ENCODE measurements at regions of chr6 and their contacts with region 1.

Region 1: GRCh38 chr6:35583893-35584688 is 71.4 kb upstream of the TULP1 start:
- DNase-seq: peak; percentile 77
- ATAC-seq: peak; percentile 72
- H3K4me3 ChIP-seq: no peak overlapping the region
- H3K27ac ChIP-seq: no peak overlapping the region
- H3K4me1 ChIP-seq: no peaks in the 10 kb centered on the region
- H3K27me3 ChIP-seq: no peaks in the 10 kb centered on the region
- CTCF ChIP-seq: peak; percentile 95
- POLR2A ChIP-seq: no peak
- RAD21 ChIP-seq: peak; percentile 95

Region 2: GRCh38 chr6:35624341-35625070 is 40.4 kb after region 1 on chr6:
- CTCF ChIA-PET with region 1: interaction called, 5 read pairs
- POLR2A ChIA-PET with region 1: no interaction called
- dilution Hi-C with region 1: no loop called
- in situ Hi-C with region 1: no loop called
- intact Hi-C with region 1: loop called (anchors 2 kb)
- DNase-seq: peak; percentile 27
- ATAC-seq: peak; percentile 44; the same call in 1 of the 2 replicates
- H3K4me3 ChIP-seq: no peak overlapping the region
- H3K27ac ChIP-seq: no peak overlapping the region
- H3K4me1 ChIP-seq: no peaks in the 10 kb centered on the region
- H3K27me3 ChIP-seq: no peaks in the 10 kb centered on the region
- CTCF ChIP-seq: peak; percentile 40
- POLR2A ChIP-seq: no peak
- RAD21 ChIP-seq: peak; percentile 38; the same call in 1 of the 2 replicates

Region 3: GRCh38 chr6:35681298-35681697 is 97.2 kb after region 1 on chr6:
- CTCF ChIA-PET with region 1: interaction called, 6 read pairs
- POLR2A ChIA-PET with region 1: no interaction called
- dilution Hi-C with region 1: no loop called
- in situ Hi-C with region 1: loop called (anchors 5 kb)
- intact Hi-C with region 1: loop called (anchors 1 kb)
- DNase-seq: no peak
- ATAC-seq: no peak
- H3K4me3 ChIP-seq: no peak overlapping the region
- H3K27ac ChIP-seq: no peak overlapping the region
- H3K4me1 ChIP-seq: peaks cover 3% of the 10 kb centered on the region
- H3K27me3 ChIP-seq: no peaks in the 10 kb centered on the region
- CTCF ChIP-seq: no peak
- POLR2A ChIP-seq: no peak
- RAD21 ChIP-seq: no peak

Region 4: GRCh38 chr6:35688581-35689322 is 104.7 kb after region 1 on chr6 and contains the start of gene FKBP5:
- CTCF ChIA-PET with region 1: interaction called, 6 read pairs
- POLR2A ChIA-PET with region 1: no interaction called
- dilution Hi-C with region 1: no loop called
- in situ Hi-C with region 1: loop called (anchors 5 kb)
- intact Hi-C with region 1: loop called (anchors 1 kb)
- DNase-seq: peak; percentile 80
- ATAC-seq: peak; percentile 99
- H3K4me3 ChIP-seq: peak within 1 kb of the TSS; percentile 59
- H3K27ac ChIP-seq: peak within 1 kb of the TSS; percentile 13; the same call in 1 of the 2 replicates
- H3K4me1 ChIP-seq: peaks cover 2% of the 10 kb centered on the region; the same call in 1 of the 2 replicates
- H3K27me3 ChIP-seq: no peaks in the 10 kb centered on the region
- CTCF ChIP-seq: no peak
- POLR2A ChIP-seq: peak; percentile 70
- RAD21 ChIP-seq: no peak
- total RNA-seq, gene FKBP5: 7.0 and 10.0 TPM in 2 replicates

Region 5: GRCh38 chr6:35731736-35732532 is 147.8 kb after region 1 on chr6:
- CTCF ChIA-PET with region 1: interaction called, 12 read pairs
- POLR2A ChIA-PET with region 1: no interaction called
- dilution Hi-C with region 1: no loop called
- in situ Hi-C with region 1: loop called (anchors 5 kb)
- intact Hi-C with region 1: loop called (anchors 1 kb)
- DNase-seq: peak; percentile 83
- ATAC-seq: peak; percentile 68
- H3K4me3 ChIP-seq: peak overlapping the region; percentile 70
- H3K27ac ChIP-seq: peak overlapping the region; percentile 88
- H3K4me1 ChIP-seq: peaks cover 8% of the 10 kb centered on the region
- H3K27me3 ChIP-seq: no peaks in the 10 kb centered on the region
- CTCF ChIP-seq: no peak
- POLR2A ChIP-seq: no peak
- RAD21 ChIP-seq: no peak

Region 6: DNA sequence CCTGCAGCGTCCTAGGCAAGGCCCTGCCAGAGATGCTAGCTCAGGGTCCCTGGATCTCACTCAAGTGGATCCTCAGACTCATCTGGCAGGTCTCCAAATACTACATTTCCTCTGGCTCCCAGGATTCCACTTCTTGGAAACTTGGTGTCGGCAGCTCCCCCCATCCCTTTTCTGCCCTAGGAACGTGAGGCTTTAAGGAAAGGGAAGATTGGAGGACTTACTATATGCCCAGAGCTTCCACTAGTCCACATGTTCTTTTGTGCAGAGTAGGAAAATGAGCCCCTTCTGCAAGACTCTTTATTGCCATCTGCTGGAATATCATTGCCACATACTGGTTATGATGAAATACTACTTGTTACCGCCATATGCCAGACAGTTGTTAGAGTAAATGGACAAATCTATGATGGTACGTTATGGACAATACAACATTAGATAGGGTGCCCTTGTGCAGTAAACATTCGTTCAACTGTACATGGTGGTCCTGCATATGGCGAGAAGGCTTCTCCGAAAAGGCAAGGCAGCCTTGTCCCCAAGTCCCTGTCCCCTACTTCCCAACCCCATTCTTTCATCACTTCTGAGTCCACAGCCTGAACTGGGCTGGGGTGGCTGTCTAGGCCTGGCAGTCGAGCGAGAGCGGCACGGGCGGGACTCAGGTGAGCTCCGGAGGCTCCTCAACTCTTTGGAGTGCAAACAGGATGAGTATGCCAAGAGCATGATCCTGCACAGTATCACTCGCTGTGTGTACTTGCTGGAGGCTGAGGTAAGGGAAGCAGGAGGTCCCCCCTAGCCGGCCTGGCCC is 153.5 kb after region 1 on chr6:
- CTCF ChIA-PET with region 1: interaction called, 12 read pairs
- POLR2A ChIA-PET with region 1: no interaction called
- dilution Hi-C with region 1: no loop called
- in situ Hi-C with region 1: loop called (anchors 5 kb)
- intact Hi-C with region 1: loop called (anchors 1 kb)
- DNase-seq: peak; percentile 87
- ATAC-seq: peak; percentile 87
- H3K4me3 ChIP-seq: no peak overlapping the region
- H3K27ac ChIP-seq: no peak overlapping the region
- H3K4me1 ChIP-seq: no peaks in the 10 kb centered on the region
- H3K27me3 ChIP-seq: peaks cover 1% of the 10 kb centered on the region; the same call in 1 of the 2 replicates
- CTCF ChIP-seq: peak; percentile 91
- POLR2A ChIP-seq: no peak
- RAD21 ChIP-seq: peak; percentile 93

Measured in IMR-90 (cell line).